ENCODE measurements at regions of chr21 and their contacts with region 1.

Region 1: DNA sequence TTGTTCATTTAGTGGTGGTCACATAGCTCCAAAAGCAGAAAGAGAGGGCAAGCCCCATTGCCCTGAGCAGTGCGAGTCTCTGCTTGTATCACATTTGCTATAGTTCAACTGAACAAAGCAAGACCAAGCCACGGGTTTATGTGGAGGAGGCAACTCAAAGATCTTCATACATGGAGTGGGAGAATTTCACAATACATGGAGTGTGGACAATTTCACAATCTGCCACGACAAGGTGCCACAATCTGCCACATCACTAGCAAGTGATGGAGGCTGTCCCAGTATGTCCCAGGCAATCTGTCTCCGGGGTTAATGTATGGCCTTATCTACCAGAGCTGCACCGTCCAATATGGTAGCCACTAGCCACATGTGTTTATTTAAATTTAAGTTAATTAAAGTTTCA is 44.5 kb upstream of the DYRK1A start:
- DNase-seq: no peak
- ATAC-seq: no peak
- H3K4me3 ChIP-seq: no peak overlapping the region
- H3K27ac ChIP-seq: no peak overlapping the region
- H3K4me1 ChIP-seq: no peaks in the 10 kb centered on the region
- H3K27me3 ChIP-seq: no peaks in the 10 kb centered on the region
- CTCF ChIP-seq: no peak
- POLR2A ChIP-seq: no peak
- RAD21 ChIP-seq: no peak

Region 2: GRCh38 chr21:37273911-37274690 is 48.0 kb before region 1 on chr21:
- CTCF ChIA-PET with region 1: no interaction called
- POLR2A ChIA-PET with region 1: no interaction called
- dilution Hi-C with region 1: no loop called
- in situ Hi-C with region 1: no loop called
- intact Hi-C with region 1: loop called (anchors 10 kb)
- DNase-seq: no peak
- ATAC-seq: no peak
- H3K4me3 ChIP-seq: no peak overlapping the region
- H3K27ac ChIP-seq: no peak overlapping the region
- H3K4me1 ChIP-seq: peaks cover 2% of the 10 kb centered on the region; the same call in 1 of the 2 replicates
- H3K27me3 ChIP-seq: 0 out of 2 replicates have a peak, but pooled peaks cover 1% of the 10 kb centered on the region
- CTCF ChIP-seq: no peak
- POLR2A ChIP-seq: no peak
- RAD21 ChIP-seq: no peak